Astrocyte of the cerebellum (primary cell): ENCODE measurements at regions of chr12 and their contacts with region 1.

Region 1: DNA sequence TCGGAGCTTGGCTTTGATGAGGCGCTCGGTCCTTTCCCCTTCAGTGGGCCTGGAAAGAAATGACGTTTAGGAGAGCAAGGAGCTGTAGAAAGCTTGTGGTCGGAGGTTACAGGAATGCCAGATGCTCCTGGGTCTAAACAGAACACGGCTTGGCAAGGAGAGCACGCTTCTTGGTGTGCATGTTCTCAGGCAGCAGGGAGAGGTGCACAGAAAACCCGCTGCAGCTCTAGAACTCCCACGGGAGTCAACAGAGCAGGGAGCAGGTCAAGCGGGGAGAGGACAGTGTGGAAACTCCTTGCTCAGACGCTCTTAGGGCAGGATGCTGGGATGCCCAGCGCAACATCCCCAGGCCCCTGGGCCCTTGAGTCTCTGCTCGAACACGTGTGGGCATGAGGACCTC is 51.0 kb downstream of the SSH1 start:
- DNase-seq: no peak
- H3K4me3 ChIP-seq: no peak overlapping the region
- CTCF ChIP-seq: no peak

Region 2: DNA sequence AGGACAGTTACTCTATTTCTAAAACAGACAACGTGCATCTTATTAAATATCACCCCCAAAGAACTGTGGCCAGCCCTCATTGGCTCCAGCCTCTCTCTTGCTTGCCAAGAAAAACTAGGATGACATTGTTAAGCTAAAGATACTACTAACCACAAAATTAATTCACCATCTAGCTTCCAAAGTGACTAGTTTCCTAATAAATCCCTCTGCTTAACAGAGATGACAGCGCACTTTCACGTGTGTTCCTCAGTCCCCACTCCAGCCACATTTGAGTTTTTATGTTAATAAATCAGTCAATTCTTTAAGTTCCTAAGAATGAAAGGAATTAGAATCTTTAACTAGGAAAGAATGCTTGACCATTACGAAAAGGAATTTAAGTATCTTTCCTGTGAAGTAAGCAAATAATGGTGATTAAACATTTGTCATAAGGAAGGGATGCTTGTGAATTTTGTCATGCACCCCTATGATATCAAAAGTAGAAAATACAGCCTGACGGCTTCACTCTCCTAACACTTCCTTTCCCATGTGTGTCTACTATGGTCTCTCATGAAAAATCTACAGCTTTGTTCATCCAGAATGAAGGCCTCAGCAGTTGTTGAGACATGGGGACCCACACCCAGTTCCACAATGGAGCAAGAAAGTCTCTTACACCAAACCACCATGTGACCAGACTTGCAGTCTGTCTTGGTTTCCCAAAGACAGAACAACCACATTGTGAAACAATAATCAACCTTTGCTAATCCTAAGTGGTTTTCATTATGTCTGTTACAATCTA is 83.2 kb before region 1 on chr12:
- in situ Hi-C with region 1: loop called (anchors 5 kb)
- DNase-seq: peak; percentile 39
- H3K4me3 ChIP-seq: no peak overlapping the region
- CTCF ChIP-seq: no peak

Region 3: GRCh38 chr12:108734200-108734906 is 72.0 kb before region 1 on chr12:
- in situ Hi-C with region 1: no loop called
- DNase-seq: peak; percentile 78
- H3K4me3 ChIP-seq: no peak overlapping the region
- CTCF ChIP-seq: no peak